H1 (cell line): ENCODE measurements at regions of chr7 and their contacts with region 1.

Region 1: GRCh38 chr7:100586266-100587025 is at the start of gene FBXO24:
- DNase-seq: peak; percentile 99 to 100
- H3K4me3 ChIP-seq: peak within 1 kb of the TSS; percentile 80 to 88 (median 80)
- H3K27ac ChIP-seq: peak within 1 kb of the TSS; percentile 86
- H3K4me1 ChIP-seq: peaks cover 0 to 36% (median 20%) of the 10 kb centered on the region in 4 experiments; a peak in 6 of 7 replicates
- H3K27me3 ChIP-seq: peaks cover 0 to 2% (median under 1%) of the 10 kb centered on the region in 4 experiments; a peak in 3 of 7 replicates
- CTCF ChIP-seq: 0 out of 4 replicates have a peak, but pooled peaks of 1 of the 3 experiments have one; percentile 0
- EP300 ChIP-seq: no peak
- POLR2A ChIP-seq: peak in 1 of 2 experiments; percentile 47; a peak in 2 of 3 replicates
- RAD21 ChIP-seq: 0 out of 4 replicates have a peak, but pooled peaks of 1 of the 2 experiments have one; percentile 4
- total RNA-seq, gene FBXO24: 0.35 and 0.59 TPM in 2 replicates

Region 2: DNA sequence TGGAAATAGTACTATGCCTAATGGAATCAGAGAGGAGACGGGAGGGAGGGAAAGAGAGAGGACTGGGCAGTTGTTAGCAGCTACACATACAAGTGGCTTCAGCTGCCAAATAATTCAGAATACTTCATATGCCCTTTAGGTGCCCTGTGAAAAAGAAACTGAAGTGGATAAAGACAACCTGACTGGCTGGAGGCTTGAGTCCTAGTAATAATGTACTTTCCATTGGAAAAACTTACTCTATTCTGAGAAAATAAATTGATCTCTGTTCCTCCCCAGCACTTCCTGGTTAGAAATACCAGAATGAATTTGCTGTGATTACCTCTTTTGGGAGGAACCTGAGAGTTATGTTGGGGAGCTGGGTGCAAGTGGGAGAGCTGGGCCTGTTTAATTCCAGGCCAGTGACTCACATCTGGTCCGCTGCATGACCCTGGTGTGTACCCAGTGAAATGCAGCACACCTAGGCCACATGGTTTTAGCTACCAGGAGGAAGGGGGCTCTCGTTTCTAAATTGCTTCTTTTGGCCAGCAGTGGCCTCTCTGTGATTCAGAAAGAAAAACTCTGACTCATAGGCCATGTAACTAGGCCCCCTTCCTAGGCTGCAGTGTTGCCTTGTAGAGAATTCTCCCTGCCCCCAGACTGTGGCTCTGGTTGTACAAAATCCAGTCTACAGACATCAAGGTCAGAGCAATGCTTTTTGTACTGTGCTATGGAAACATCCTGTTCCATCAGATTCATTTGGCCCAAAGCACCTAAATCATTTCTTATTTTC is 40.9 kb before region 1 on chr7:
- CTCF ChIA-PET with region 1: no interaction called
- POLR2A ChIA-PET with region 1: no interaction called
- DNase-seq: no peak
- H3K4me3 ChIP-seq: no peak overlapping the region; a peak in 1 of 8 replicates
- H3K27ac ChIP-seq: peak overlapping the region; percentile 0; the same call in 1 of the 2 replicates
- H3K4me1 ChIP-seq: peaks cover 11 to 44% (median 26%) of the 10 kb centered on the region in 4 experiments; a peak in 6 of 7 replicates
- H3K27me3 ChIP-seq: peaks cover 0 to under 1% (median under 1%) of the 10 kb centered on the region in 4 experiments; a peak in 1 of 7 replicates
- CTCF ChIP-seq: peak in 1 of 3 experiments; percentile 12; a peak in 2 of 4 replicates
- EP300 ChIP-seq: no peak
- POLR2A ChIP-seq: peak in 1 of 2 experiments; percentile 33; a peak in 1 of 3 replicates
- RAD21 ChIP-seq: no peak

Region 3: GRCh38 chr7:100568896-100569844 is 17.3 kb before region 1 on chr7:
- CTCF ChIA-PET with region 1: interaction called, 171 read pairs
- POLR2A ChIA-PET with region 1: interaction called, 83 read pairs
- DNase-seq: peak; percentile 67 to 86
- H3K4me3 ChIP-seq: peak overlapping the region; percentile 42 to 66 (median 44)
- H3K27ac ChIP-seq: no peak overlapping the region
- H3K4me1 ChIP-seq: peaks cover 0 to 46% (median 27%) of the 10 kb centered on the region in 4 experiments; a peak in 6 of 7 replicates
- H3K27me3 ChIP-seq: peaks cover 0 to 4% (median under 1%) of the 10 kb centered on the region in 4 experiments; a peak in 1 of 7 replicates
- CTCF ChIP-seq: peak in 2 of 3 experiments; percentile 55 to 76; a peak in 2 of 4 replicates
- EP300 ChIP-seq: no peak
- POLR2A ChIP-seq: peak in 1 of 2 experiments; percentile 85; a peak in 2 of 3 replicates
- RAD21 ChIP-seq: peak; percentile 34 to 39; a peak in 3 of 4 replicates

Region 4: DNA sequence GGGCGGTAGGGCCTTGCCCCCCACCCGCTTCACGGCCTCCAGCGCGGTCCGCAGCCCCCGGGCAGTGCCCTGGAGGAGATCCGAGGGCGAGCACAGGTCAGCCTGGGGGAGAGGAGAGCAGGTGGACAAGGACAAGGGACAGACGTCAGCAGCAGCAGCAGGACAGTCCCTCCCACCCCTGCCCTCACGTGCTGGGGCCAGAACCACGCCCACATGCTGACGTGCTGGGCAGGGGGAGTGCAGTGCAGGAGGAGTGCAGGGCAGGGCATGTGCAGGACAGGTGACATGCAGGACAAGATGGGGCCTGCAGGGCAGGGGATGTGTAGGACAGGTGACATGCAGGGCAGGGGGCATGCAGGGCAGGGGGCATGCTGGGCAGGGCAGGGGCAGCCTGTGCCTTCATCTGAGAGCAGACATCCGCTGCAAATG is 11.2 kb before region 1 on chr7:
- CTCF ChIA-PET with region 1: interaction called, 53 read pairs
- POLR2A ChIA-PET with region 1: interaction called, 83 read pairs
- DNase-seq: no peak
- H3K4me3 ChIP-seq: no peak overlapping the region
- H3K27ac ChIP-seq: no peak overlapping the region
- H3K4me1 ChIP-seq: peaks cover 0 to 26% (median 20%) of the 10 kb centered on the region in 4 experiments; a peak in 6 of 7 replicates
- H3K27me3 ChIP-seq: peaks cover 0 to 4% (median under 1%) of the 10 kb centered on the region in 4 experiments; a peak in 1 of 7 replicates
- CTCF ChIP-seq: no peak
- EP300 ChIP-seq: no peak
- POLR2A ChIP-seq: no peak
- RAD21 ChIP-seq: no peak

Region 5: DNA sequence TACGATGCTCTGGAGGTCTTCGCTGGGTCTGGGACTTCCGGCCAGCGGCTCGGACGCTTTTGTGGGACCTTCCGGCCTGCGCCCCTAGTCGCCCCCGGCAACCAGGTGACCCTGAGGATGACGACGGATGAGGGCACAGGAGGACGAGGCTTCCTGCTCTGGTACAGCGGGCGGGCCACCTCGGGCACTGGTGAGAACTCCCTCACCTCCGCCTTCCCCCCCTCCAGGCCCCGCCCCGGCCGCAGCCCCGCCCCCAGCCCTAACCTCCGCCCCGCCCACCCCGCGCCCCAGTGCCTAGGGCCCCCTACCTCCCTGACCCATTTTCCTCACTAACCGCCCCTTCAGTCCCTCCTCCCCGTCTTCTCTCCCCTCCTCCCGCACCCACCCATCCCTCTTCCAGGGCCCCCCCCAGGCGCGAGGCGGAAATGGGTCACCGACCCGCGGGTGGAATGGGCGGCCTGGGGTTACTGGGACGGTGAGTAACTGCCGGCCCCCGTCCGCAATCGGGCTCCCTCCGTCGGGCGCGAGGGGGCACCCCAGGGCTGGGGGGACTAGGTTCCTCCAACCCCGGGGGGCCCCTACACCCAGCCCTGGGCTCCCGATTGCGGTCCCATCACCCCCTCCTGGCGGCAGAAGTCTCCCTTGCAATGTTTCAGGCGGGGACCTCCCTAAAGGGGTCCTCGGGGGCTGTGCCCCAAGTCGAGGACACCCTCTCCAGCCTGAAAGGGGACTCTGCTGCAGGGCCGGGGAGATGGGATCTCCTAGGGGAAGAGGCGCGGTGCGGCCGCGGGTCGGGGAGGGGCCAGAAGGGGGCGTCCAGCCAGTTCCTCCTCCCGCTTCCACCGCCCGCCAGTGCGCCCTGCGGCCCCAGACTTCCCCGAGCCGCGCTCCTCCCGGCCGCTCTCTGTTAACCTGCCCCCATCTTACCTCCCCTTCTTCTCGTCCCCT is 17.9 kb after region 1 on chr7:
- CTCF ChIA-PET with region 1: interaction called, 51 read pairs
- POLR2A ChIA-PET with region 1: interaction called, 172 read pairs
- DNase-seq: peak in 1 of 2 experiments; percentile 92
- H3K4me3 ChIP-seq: peak overlapping the region; percentile 68 to 82 (median 78)
- H3K27ac ChIP-seq: peak overlapping the region; percentile 48; the same call in 1 of the 2 replicates
- H3K4me1 ChIP-seq: peaks cover 0 to 31% (median 20%) of the 10 kb centered on the region in 4 experiments; a peak in 6 of 7 replicates
- H3K27me3 ChIP-seq: peaks cover 0 to 10% (median 4%) of the 10 kb centered on the region in 4 experiments; a peak in 2 of 7 replicates
- CTCF ChIP-seq: peak in 1 of 3 experiments; percentile 27; a peak in 2 of 4 replicates
- EP300 ChIP-seq: no peak
- POLR2A ChIP-seq: peak in 1 of 2 experiments; percentile 88; a peak in 2 of 3 replicates
- RAD21 ChIP-seq: peak; percentile 12 to 16; a peak in 2 of 4 replicates

Region 6: DNA sequence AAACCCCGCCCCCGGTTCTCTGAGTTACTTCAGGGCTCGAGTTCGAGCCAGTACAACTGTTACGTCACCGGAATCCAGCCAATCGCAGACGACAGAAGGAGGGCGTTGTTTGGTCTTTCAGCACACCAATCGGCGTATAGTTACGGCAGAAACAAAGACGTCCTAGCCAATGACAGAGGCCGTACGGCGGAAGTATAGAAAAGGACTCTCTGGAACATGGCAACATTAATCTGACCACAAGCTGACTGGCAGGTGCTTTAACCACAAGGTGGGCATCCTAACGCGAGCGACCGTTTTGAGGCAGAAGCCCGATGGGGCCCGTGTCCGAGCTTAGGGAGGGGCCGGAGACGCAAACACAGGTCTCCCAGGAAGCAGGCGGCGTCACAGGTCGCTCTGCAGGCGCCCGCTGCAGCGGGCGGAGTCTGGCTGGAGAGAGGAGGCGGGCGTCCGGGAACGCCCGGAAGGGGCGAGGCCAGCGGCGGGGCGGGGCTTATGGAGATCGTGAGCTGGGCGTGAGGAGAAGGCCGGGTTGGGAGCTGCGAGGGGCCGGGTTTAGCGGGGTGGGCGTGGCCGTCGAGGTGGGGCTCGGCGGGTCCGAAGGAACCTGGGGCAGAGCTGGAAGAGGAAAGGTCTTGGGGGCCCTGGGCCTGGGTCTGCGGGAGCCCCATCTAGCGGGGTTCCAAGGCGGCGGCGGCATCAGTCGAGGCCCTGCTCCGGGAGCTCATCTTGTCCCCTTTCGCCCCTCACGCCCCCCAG is 25.7 kb after region 1 on chr7 and contains the start of gene MOSPD3:
- CTCF ChIA-PET with region 1: interaction called, 14 read pairs
- POLR2A ChIA-PET with region 1: interaction called, 172 read pairs
- DNase-seq: peak; percentile 98 to 99
- H3K4me3 ChIP-seq: peak within 1 kb of the TSS; percentile 74 to 83 (median 76)
- H3K27ac ChIP-seq: peak within 1 kb of the TSS; percentile 98
- H3K4me1 ChIP-seq: peaks cover 0 to 6% (median 2%) of the 10 kb centered on the region in 4 experiments; a peak in 3 of 7 replicates
- H3K27me3 ChIP-seq: no peaks in the 10 kb centered on the region; a peak in 1 of 7 replicates
- CTCF ChIP-seq: no peak
- EP300 ChIP-seq: no peak
- POLR2A ChIP-seq: peak in 1 of 2 experiments; percentile 93; a peak in 2 of 3 replicates
- RAD21 ChIP-seq: no peak
- total RNA-seq, gene MOSPD3: 19.3 and 20.7 TPM in 2 replicates